ENCODE measurements at regions of chr3 and their contacts with region 1.

Region 1: DNA sequence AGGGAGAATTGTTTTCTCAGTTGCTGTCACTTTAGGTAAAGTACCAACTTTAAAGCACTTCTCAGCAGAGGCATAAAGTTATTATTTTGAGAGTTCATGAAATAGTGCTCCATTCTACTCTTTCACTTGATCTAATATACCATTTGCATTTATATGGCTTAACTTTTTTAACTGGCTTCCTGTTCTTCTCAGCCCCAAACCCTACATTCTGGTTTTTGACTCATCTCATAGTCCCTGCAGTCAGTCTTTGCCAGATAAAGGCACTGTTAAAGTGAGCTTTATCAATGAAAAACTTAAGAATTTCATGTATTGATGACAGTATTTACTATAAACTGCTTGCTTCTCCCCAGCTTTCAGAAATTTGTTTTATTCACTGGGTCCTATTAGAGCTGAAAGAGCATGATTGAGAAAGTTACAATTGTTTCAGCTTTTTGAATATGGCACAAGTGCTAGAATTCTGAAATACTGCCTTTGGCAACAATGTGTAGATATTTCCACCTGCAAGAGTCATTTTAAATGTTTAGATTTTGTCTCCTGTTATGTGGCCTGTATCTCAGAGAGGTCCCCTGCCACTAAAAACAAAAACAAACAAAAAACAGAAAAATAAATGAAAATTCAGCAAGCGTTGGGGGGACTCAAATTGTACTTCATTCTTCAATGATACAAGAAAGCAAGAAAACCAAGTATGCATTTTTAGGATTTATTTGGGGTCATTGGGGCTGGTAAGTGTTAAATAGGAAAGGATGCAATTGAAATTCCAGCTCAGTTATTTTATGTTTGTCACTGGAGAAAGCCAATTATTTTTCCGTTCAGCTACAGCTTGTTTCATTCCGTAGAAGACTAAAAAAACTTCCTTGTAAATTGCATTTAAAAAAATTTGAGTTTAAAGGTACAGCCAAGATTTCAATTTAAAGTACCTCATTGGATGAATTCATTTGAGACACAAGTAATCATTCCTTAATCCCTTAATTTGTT is 28.6 kb downstream of the TGFBR2 start:
- DNase-seq: no peak
- ATAC-seq: no peak
- H3K4me3 ChIP-seq: peak overlapping the region in 1 of 5 experiments; percentile 22
- H3K4me3 Mint-ChIP-seq: peak overlapping the region; percentile 32
- H3K27ac ChIP-seq: peak overlapping the region; percentile 58 to 89
- H3K27ac Mint-ChIP-seq: peak overlapping the region; percentile 60
- H3K4me1 ChIP-seq: peaks cover 96 to 99% of the 10 kb centered on the region in 2 donors
- H3K4me1 Mint-ChIP-seq: peaks cover 96% of the 10 kb centered on the region
- H3K27me3 ChIP-seq: no peaks in the 10 kb centered on the region
- H3K27me3 Mint-ChIP-seq: no peaks in the 10 kb centered on the region
- CTCF ChIP-seq: no peak

Region 2: GRCh38 chr3:29822071-29822470 is 813.0 kb before region 1 on chr3:
- CTCF ChIA-PET with region 1: no interaction called
- POLR2A ChIA-PET with region 1: no interaction called
- intact Hi-C with region 1: no loop called
- DNase-seq: no peak
- ATAC-seq: no peak
- H3K4me3 ChIP-seq: no peak overlapping the region
- H3K4me3 Mint-ChIP-seq: no peak overlapping the region
- H3K27ac ChIP-seq: no peak overlapping the region
- H3K27ac Mint-ChIP-seq: no peak overlapping the region
- H3K4me1 ChIP-seq: no peaks in the 10 kb centered on the region
- H3K4me1 Mint-ChIP-seq: no peaks in the 10 kb centered on the region
- H3K27me3 ChIP-seq: no peaks in the 10 kb centered on the region
- H3K27me3 Mint-ChIP-seq: no peaks in the 10 kb centered on the region
- CTCF ChIP-seq: no peak

Region 3: GRCh38 chr3:30649572-30650318 is 14.7 kb after region 1 on chr3:
- CTCF ChIA-PET with region 1: interaction called, 8 read pairs
- POLR2A ChIA-PET with region 1: interaction called, 4 read pairs
- intact Hi-C with region 1: loop called (anchors 1 kb)
- DNase-seq: peak; percentile 82
- ATAC-seq: peak; percentile 71
- H3K4me3 ChIP-seq: peak overlapping the region in 1 of 5 experiments; percentile 30
- H3K4me3 Mint-ChIP-seq: peak overlapping the region; percentile 72
- H3K27ac ChIP-seq: peak overlapping the region; percentile 64 to 73
- H3K27ac Mint-ChIP-seq: peak overlapping the region; percentile 92
- H3K4me1 ChIP-seq: peaks cover 78 to 86% of the 10 kb centered on the region in 2 donors
- H3K4me1 Mint-ChIP-seq: peaks cover 88% of the 10 kb centered on the region
- H3K27me3 ChIP-seq: no peaks in the 10 kb centered on the region
- H3K27me3 Mint-ChIP-seq: no peaks in the 10 kb centered on the region
- CTCF ChIP-seq: no peak